ENCODE measurements at regions of chr3 and their contacts with region 1.

Region 1: DNA sequence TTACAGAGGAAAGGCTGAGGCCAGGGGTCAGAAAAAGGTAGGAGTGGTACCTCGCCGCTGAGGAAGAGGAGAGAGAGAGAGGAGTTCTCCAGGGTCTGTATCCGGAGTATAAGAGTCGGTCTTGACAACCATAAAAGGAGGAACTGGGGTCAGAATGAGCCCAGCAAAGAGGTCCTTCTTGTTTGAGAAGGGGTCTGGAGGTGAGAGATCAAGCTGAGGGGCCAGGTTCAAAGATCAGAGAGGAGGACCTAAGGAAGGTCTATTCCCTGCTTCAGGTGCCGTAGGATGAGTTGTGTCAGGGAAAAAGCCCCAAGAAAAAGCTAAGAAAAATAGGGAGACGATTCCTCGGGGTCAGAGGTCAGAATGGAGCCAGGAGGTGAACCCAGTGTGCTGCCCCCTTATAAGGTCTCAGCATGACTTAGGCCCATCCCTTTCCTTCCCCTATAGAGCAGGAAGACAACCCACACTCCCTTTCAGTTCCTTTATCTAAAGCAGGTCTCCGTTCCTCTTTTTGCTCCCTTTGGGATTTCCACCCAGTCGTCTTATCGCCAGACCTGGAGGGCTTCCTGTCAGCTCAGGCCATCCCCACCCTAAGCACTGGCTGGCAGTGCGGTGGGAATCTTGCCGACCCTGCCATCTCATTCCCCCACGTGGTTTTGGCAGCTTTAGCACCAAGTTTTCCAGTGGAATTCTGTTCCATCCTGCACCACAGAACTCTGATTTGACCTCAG is 651 bp downstream of the MTMR14 start:
- DNase-seq: peak; percentile 25
- ATAC-seq: peak; percentile 59
- H3K4me3 Mint-ChIP-seq: peak overlapping the region; percentile 94
- H3K27ac Mint-ChIP-seq: peak overlapping the region; percentile 84
- H3K4me1 Mint-ChIP-seq: peaks cover 54% of the 10 kb centered on the region
- H3K27me3 Mint-ChIP-seq: no peaks in the 10 kb centered on the region
- CTCF ChIP-seq: no peak

Region 2: DNA sequence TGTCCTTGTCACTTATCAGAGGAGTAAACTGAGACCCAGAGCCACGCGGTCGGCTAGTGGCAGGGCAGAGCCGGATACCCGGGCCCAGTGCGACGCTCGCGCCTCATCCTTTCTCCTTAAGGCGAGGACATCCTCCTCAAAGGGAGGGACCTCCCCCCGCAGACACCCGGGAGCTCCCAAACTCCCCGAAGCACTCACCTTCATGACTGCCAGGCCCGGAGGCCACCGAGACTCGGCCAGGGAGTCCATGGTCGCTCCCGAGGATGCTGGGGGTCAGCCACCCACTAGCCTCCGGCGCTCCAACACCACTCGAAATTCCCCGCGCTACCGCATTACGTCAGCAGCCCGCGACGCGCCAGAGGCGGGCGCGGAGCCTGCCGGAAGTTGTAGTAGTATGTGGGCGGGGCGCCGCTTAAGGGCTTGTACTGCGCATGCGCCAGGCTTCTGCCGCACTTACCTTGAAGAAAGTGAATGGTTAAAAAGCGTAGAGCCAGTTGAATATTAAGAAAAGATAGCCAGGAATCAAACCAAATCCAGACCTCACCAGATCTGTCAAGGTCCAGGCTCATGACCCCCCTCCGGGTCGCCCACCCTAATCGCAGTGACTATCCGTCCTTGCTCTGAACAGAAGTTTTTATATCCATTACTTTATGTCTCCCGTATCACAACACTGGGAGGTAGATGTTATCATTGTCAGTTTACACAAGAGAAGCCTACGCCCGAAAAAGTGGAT is 686.7 kb before region 1 on chr3 and contains the start of gene RAD18:
- CTCF ChIA-PET with region 1: no interaction called
- POLR2A ChIA-PET with region 1: no interaction called
- intact Hi-C with region 1: loop called (anchors 1 kb)
- DNase-seq: peak; percentile 91
- ATAC-seq: peak; percentile 96
- H3K4me3 Mint-ChIP-seq: peak within 1 kb of the TSS; percentile 95
- H3K27ac Mint-ChIP-seq: peak within 1 kb of the TSS; percentile 89
- H3K4me1 Mint-ChIP-seq: peaks cover 31% of the 10 kb centered on the region
- H3K27me3 Mint-ChIP-seq: peaks cover 5% of the 10 kb centered on the region
- CTCF ChIP-seq: no peak
- total RNA-seq, gene RAD18: 16.6 and 21.6 TPM in 2 replicates

Region 3: DNA sequence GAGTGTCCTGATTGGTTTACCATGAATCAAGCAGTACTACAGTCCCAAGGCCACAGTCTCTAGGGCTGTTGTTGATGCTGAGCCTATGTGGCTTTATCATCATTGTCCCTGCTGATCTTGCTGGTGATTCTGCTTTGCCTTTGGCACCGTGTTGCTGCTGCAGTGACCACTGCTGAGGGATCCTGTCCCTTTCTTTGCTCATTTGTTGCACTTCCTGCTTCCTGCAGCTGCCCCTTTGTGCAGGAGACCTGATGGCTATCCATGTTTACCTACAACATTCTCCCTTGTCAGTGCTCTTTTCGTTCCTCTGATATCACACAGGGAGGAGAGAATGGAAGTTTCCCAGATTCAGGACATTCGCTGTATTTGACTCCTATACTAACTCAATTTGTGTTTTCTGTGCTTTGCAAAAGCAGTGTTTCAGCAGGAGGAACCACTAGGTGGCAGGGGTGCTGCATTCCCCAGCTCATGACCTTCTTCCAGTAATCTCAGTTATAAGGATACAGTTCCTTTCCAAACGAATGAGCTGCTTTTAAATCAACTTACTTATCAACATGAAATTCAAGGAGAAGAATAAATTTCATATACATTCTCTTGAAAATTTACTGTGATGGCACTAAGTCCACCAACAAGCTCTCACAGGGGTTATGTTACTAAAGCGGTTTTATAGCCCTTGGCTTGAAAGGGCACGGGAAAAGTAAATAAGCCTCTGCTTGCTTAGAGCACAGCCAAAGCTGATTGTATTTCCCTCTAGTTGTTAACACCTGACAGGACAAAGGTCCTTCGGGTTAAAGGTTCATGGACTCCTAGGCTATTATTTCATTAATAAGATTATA is 296.8 kb before region 1 on chr3:
- CTCF ChIA-PET with region 1: no interaction called
- POLR2A ChIA-PET with region 1: interaction called, 3 read pairs
- intact Hi-C with region 1: loop called (anchors 2 kb)
- DNase-seq: peak; percentile 19
- ATAC-seq: peak; percentile 53
- H3K4me3 Mint-ChIP-seq: no peak overlapping the region
- H3K27ac Mint-ChIP-seq: no peak overlapping the region
- H3K4me1 Mint-ChIP-seq: peaks cover 28% of the 10 kb centered on the region
- H3K27me3 Mint-ChIP-seq: no peaks in the 10 kb centered on the region
- CTCF ChIP-seq: peak; percentile 47

Region 4: GRCh38 chr3:9690451-9691450 is 40.8 kb after region 1 on chr3:
- CTCF ChIA-PET with region 1: no interaction called
- POLR2A ChIA-PET with region 1: interaction called, 8 read pairs
- intact Hi-C with region 1: loop called (anchors 1 kb)
- DNase-seq: peak; percentile 60
- ATAC-seq: peak; percentile 99
- H3K4me3 Mint-ChIP-seq: no peak overlapping the region
- H3K27ac Mint-ChIP-seq: peak overlapping the region; percentile 12
- H3K4me1 Mint-ChIP-seq: peaks cover 24% of the 10 kb centered on the region
- H3K27me3 Mint-ChIP-seq: no peaks in the 10 kb centered on the region
- CTCF ChIP-seq: no peak

Region 5: DNA sequence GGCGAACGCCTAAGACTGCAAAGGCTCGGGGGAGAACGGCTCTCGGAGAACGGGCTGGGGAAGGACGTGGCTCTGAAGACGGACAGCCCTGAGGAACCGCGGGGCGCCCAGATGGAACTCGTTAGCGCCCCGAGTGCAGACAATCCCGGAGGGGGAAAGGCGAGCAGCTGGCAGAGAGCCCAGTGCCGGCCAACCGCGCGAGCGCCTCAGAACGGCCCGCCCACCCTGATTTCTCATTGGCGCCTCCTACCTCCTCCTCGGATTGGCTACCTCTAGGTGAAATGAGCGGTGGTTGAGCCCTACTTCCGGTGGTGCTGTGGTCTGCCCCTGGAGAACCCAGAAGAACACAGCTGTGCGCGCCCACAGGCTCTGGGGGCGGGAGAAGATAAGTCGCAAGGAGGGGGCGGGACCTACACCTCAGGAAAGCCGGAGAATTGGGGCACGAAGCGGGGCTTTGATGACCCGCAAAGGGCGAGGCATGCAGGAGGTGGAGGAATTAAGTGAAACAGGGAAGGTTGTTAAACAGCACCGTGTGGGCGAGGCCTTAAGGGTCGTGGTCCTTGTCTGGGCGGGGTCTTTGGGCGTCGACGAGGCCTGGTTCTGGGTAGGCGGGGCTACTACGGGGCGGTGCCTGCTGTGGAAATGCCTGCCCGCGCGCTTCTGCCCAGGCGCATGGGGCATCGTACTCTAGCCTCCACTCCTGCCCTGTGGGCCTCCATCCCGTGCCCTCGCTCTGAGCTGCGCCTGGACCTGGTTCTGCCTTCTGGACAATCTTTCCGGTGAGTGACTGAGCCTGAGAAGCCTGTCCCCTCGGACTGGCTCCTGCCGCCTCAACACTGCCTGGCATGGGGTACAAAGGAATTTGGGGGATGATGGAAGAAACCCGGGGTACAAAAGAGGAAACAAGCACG is 99.9 kb after region 1 on chr3 and contains the start of gene OGG1:
- CTCF ChIA-PET with region 1: no interaction called
- POLR2A ChIA-PET with region 1: interaction called, 4 read pairs
- intact Hi-C with region 1: loop called (anchors 1 kb)
- DNase-seq: peak; percentile 89
- ATAC-seq: peak; percentile 90
- H3K4me3 Mint-ChIP-seq: peak within 1 kb of the TSS; percentile 94
- H3K27ac Mint-ChIP-seq: peak within 1 kb of the TSS; percentile 95
- H3K4me1 Mint-ChIP-seq: peaks cover 48% of the 10 kb centered on the region
- H3K27me3 Mint-ChIP-seq: no peaks in the 10 kb centered on the region
- CTCF ChIP-seq: no peak
- total RNA-seq, gene OGG1: 43.5 and 60.7 TPM in 2 replicates

Measured in activated B cell treated with CpG ODN at 0.5 μM for 24 hours (primary cell).